A549 (cell line): ENCODE measurements at regions of chr11 and their contacts with region 1.

Region 1: GRCh38 chr11:1832211-1832919 is 2.4 kb upstream of the SYT8 start:
- DNase-seq: peak; percentile 44 to 69
- ATAC-seq: peak; percentile 41 to 83; a peak in 3 of 6 replicates
- H3K4me3 ChIP-seq: peak overlapping the region; percentile 27
- H3K27ac ChIP-seq: peak overlapping the region; percentile 73 to 89
- H3K4me1 ChIP-seq: peaks cover 66% of the 10 kb centered on the region
- CTCF ChIP-seq: peak; percentile 99
- EP300 ChIP-seq: no peak
- POLR2A ChIP-seq: no peak
- RAD21 ChIP-seq: peak; percentile 80 to 99

Region 2: GRCh38 chr11:1701091-1701807 is 131.1 kb before region 1 on chr11:
- CTCF ChIA-PET with region 1: interaction called, 93 read pairs
- POLR2A ChIA-PET with region 1: interaction called, 3 read pairs
- DNase-seq: no peak
- ATAC-seq: no peak
- H3K4me3 ChIP-seq: no peak overlapping the region
- H3K27ac ChIP-seq: no peak overlapping the region
- H3K4me1 ChIP-seq: peaks cover under 1% of the 10 kb centered on the region; the same call in 1 of the 3 replicates
- CTCF ChIP-seq: no peak
- EP300 ChIP-seq: no peak
- POLR2A ChIP-seq: no peak
- RAD21 ChIP-seq: no peak

Region 3: DNA sequence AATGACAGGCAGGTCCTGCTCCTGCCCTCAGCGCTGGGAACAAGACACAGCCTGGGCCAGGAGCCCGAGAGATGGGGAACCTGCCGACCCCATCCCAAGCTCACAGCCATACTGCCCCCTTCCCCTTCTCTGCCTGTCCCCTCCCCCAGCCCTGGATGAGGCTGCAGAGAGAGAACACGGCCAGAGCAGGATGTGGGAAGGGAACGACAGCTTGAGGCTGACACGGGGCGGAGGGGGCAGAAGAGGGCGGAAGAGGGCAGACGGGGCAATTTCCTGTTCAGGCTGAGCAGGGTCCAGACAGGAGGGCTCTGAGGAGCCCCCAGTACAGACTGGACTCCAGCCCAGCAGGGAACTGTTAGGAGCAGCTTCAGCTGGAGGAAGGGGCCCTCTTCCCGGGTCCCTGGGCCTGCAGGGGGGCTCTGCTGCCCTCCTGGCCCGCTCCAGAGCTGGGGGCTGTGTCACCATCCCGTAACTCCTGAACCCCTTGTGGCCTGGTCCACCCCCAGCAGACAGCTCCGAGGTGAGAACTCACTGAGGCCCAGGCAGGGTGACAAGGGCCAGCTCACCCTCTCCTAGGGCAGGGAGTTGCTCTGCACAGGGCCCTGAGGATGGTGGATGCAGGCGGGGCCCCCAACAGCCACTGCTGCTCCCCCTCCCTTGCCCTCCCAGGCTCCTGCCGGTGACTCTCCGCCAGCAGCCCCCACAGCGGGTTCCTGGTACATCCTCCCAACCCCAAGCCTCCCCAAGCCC is 74.3 kb before region 1 on chr11:
- CTCF ChIA-PET with region 1: interaction called, 19 read pairs
- POLR2A ChIA-PET with region 1: no interaction called
- DNase-seq: no peak
- ATAC-seq: no peak
- H3K4me3 ChIP-seq: no peak overlapping the region
- H3K27ac ChIP-seq: 0 out of 6 replicates have a peak overlapping the region, but pooled peaks of 1 of the 2 experiments have one; percentile 24
- H3K4me1 ChIP-seq: peaks cover 40% of the 10 kb centered on the region
- CTCF ChIP-seq: no peak
- EP300 ChIP-seq: no peak
- POLR2A ChIP-seq: no peak
- RAD21 ChIP-seq: no peak

Region 4: DNA sequence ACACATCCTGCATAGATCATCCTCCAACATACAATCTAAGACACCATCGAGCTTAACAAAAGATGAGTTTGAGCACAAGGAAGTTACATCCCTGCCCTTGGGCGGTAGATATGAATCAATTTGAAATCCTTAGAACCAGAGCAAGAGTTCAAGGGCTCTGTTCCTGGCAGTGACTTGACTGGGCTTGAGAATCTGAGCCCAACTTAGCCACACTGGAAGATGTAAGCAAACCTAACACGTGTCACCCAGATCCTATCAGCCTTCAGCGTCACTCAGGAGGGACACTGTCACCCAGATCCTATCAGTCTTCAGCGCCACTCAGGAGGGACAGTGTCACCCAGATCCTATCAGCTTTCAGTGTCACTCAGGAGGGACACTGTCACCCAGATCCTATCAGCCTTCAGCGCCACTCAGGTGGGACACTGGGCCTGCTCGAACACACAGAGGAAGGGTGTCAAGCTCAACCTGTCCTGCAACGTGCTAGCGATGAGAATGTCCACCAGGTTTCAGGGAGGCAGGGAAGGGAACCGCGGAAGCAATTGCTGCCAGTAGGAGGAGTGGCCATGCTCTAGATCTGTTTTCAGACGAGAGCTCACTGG is 35.9 kb before region 1 on chr11:
- CTCF ChIA-PET with region 1: interaction called, 14 read pairs
- POLR2A ChIA-PET with region 1: no interaction called
- DNase-seq: no peak
- ATAC-seq: peak in 1 of 2 experiments; percentile 45; a peak in 3 of 6 replicates
- H3K4me3 ChIP-seq: no peak overlapping the region
- H3K27ac ChIP-seq: no peak overlapping the region
- H3K4me1 ChIP-seq: no peaks in the 10 kb centered on the region
- CTCF ChIP-seq: no peak
- EP300 ChIP-seq: no peak
- POLR2A ChIP-seq: no peak
- RAD21 ChIP-seq: no peak

Region 5: GRCh38 chr11:1876361-1877063 is 44.1 kb after region 1 on chr11:
- CTCF ChIA-PET with region 1: interaction called, 36 read pairs
- POLR2A ChIA-PET with region 1: no interaction called
- DNase-seq: peak; percentile 48 to 80
- ATAC-seq: peak; percentile 57 to 79; a peak in 4 of 6 replicates
- H3K4me3 ChIP-seq: no peak overlapping the region
- H3K27ac ChIP-seq: peak overlapping the region in 1 of 2 experiments; percentile 65; a peak in 3 of 6 replicates
- H3K4me1 ChIP-seq: peaks cover 19% of the 10 kb centered on the region; the same call in 2 of the 3 replicates
- CTCF ChIP-seq: peak; percentile 61
- EP300 ChIP-seq: no peak
- POLR2A ChIP-seq: no peak
- RAD21 ChIP-seq: peak; percentile 40 to 44; a peak in 4 of 5 replicates

Region 6: GRCh38 chr11:1943977-1944376 is 111.6 kb after region 1 on chr11:
- CTCF ChIA-PET with region 1: interaction called, 16 read pairs
- POLR2A ChIA-PET with region 1: no interaction called
- DNase-seq: no peak
- ATAC-seq: no peak; a peak in 1 of 6 replicates
- H3K4me3 ChIP-seq: no peak overlapping the region
- H3K27ac ChIP-seq: no peak overlapping the region
- H3K4me1 ChIP-seq: no peaks in the 10 kb centered on the region
- CTCF ChIP-seq: no peak
- EP300 ChIP-seq: no peak
- POLR2A ChIP-seq: no peak
- RAD21 ChIP-seq: no peak